A549 (cell line): ENCODE measurements at regions of chr20 and their contacts with region 1.

Region 1: GRCh38 chr20:2101865-2102584 is 398 bp downstream of the STK35 start:
- DNase-seq: peak; percentile 96 to 97
- ATAC-seq: peak; percentile 87 to 94
- H3K4me3 ChIP-seq: peak overlapping the region; percentile 92
- H3K27ac ChIP-seq: peak overlapping the region; percentile 97 to 98
- H3K4me1 ChIP-seq: peaks cover 26% of the 10 kb centered on the region; the same call in 2 of the 3 replicates
- CTCF ChIP-seq: no peak
- EP300 ChIP-seq: no peak
- POLR2A ChIP-seq: peak; percentile 79
- RAD21 ChIP-seq: peak in 1 of 2 experiments; percentile 14; a peak in 1 of 5 replicates

Region 2: DNA sequence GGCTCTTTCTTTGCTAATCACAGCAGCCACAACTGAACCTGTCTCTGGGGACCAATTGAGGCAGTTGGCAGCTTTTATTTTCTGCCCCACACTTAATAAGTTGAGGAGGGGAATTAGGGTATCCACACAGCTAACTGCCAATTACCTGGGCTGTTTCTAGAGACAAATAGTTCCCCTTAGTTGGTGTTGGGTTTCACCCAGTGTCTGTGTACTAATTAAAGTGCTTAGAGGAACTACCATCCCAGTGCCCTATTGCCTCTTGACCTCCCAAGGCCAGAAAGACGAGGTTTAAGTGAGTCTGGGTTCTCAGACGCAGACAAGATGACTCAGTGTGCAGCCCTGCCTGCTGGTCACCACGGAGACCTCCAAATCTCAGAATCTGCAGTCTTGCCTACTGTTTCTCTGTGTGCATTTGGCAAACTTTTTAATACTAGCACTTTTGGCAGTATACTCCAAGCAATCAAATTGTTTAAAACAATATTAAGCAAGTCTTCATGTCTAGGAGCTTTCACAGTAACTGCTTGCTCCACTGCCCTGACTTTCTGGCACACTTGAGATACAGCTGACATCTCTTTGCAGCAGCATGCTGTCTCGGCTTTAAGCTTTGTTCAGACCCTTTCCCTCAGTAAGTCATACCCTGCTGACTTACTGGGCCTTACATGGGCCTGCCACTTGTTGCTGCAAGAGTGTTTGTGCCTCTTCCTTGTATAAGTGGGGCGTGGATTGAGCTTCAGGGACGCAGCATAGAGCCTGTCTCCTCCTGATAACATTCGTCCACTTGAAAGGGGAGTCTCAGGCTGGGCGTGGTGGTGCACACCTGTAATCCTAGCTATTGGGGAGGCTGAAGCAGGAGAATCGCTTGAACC is 31.5 kb after region 1 on chr20:
- CTCF ChIA-PET with region 1: interaction called, 4 read pairs
- POLR2A ChIA-PET with region 1: interaction called, 10 read pairs
- DNase-seq: peak; percentile 35 to 41
- ATAC-seq: peak; percentile 70 to 81; a peak in 5 of 6 replicates
- H3K4me3 ChIP-seq: no peak overlapping the region
- H3K27ac ChIP-seq: peak overlapping the region; percentile 14 to 68; a peak in 4 of 6 replicates
- H3K4me1 ChIP-seq: peaks cover 40% of the 10 kb centered on the region
- CTCF ChIP-seq: no peak
- EP300 ChIP-seq: no peak
- POLR2A ChIP-seq: no peak
- RAD21 ChIP-seq: no peak